Activated T-helper 1 cell treated with anti-CD3 and anti-CD28 coated beads, Interleukin-12 subunit alpha, Interleukin-12 subunit beta, Interleukin-2, Interleukin-4 antibody, amounts not matched to agents 30 ng/mL and 10 ng/mL and 1 ng/mL, durations not matched to agents 14 hours and 24 hours and 36 hours (primary cell): ENCODE measurements at regions of chr10 and their contacts with region 1.

Region 1: DNA sequence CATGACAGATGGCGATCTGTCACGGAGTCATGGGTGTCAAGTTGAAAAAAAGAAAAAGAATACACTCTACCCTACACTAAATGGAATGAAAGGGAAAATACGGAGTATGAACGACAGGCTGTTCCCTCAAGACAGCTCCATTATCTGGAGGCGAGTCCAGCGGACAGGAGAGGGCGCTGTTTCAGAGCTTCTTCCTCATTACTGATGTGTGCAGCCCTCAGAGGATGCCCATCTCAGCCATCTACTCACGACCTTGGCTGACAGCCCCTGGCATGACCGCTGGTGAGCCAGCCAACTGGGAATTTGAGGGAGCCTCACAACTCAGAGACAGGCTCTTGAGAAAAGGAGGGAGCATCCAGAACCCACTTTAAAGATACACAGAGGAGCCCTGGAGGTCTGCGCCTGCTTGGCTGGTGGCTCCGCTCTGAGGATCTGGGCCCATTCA is 49.6 kb upstream of the SMNDC1 start:
- DNase-seq: peak; percentile 72
- H3K4me3 Mint-ChIP-seq: peak overlapping the region; percentile 82
- H3K27ac Mint-ChIP-seq: peak overlapping the region; percentile 97
- H3K4me1 Mint-ChIP-seq: peaks cover 82% of the 10 kb centered on the region
- H3K27me3 Mint-ChIP-seq: no peaks in the 10 kb centered on the region

Region 2: DNA sequence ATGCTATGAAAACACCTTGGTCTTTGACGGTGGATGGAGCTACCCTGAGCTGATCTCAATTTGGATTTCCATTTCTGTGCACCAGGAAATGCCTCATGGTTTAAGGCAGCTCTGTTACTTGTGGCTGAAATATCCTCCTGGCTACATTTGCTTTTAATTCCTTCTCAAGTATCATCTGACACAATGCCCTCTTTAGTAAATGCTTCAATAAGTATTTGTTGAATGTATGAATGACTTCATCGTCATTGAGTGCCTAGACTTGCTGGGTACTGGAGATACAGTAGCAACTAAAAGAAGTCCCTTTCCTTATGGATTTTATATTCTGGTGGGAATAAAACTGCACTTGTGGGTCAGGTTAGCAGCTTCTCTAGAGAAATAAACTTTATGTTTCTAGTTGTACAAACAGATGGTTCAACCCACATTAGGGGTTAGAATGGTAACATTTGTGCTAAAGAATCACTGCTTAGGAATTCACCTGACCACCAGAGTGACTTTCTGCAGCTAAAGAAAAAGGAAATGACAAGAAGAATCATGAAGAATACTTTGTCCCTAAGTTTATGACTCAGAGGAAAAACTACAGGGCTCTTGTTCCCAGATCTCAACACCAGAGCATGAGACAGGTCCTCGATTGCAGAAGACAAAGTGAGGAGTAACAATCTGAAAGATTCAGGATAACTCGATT is 27.9 kb before region 1 on chr10:
- intact Hi-C with region 1: loop called (anchors 1 kb)
- DNase-seq: no peak
- H3K4me3 Mint-ChIP-seq: peak overlapping the region; percentile 0
- H3K27ac Mint-ChIP-seq: peak overlapping the region; percentile 69
- H3K4me1 Mint-ChIP-seq: peaks cover 60% of the 10 kb centered on the region
- H3K27me3 Mint-ChIP-seq: peaks cover 3% of the 10 kb centered on the region

Region 3: GRCh38 chr10:110395725-110396651 is 41.6 kb after region 1 on chr10:
- intact Hi-C with region 1: loop called (anchors 1 kb)
- DNase-seq: peak; percentile 67
- H3K4me3 Mint-ChIP-seq: peak overlapping the region; percentile 15
- H3K27ac Mint-ChIP-seq: peak overlapping the region; percentile 77
- H3K4me1 Mint-ChIP-seq: peaks cover 75% of the 10 kb centered on the region
- H3K27me3 Mint-ChIP-seq: no peaks in the 10 kb centered on the region

Region 4: DNA sequence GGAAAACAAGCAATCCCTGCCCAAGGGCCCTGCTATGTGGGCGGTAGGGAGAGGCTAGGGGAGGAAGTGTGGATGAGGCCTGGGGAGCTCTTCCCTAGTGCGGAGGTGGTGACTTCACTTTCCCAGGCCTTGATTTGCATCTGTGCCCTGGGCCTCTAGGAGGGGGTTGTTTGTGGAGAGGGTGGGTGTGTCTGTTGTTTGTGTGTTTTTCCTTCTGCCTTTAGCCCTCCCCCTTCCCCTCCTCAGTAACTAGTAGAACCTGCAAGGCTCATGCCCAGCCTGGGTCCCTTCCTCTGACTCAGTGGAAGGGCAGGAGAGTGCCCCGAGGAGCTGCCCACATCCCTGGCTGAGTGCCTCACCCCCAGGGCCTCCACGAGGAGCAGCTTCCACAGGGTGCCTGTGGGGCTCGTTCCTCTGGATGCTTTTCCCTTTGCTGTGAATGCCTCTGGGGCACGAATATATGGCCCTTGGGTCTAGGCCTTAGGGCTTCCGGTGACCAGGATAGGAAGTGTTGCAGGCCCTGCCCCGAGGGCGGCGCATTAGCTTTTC is 53.9 kb after region 1 on chr10:
- intact Hi-C with region 1: no loop called
- DNase-seq: no peak
- H3K4me3 Mint-ChIP-seq: no peak overlapping the region
- H3K27ac Mint-ChIP-seq: peak overlapping the region; percentile 72
- H3K4me1 Mint-ChIP-seq: peaks cover 77% of the 10 kb centered on the region
- H3K27me3 Mint-ChIP-seq: peaks cover 8% of the 10 kb centered on the region

Region 5: DNA sequence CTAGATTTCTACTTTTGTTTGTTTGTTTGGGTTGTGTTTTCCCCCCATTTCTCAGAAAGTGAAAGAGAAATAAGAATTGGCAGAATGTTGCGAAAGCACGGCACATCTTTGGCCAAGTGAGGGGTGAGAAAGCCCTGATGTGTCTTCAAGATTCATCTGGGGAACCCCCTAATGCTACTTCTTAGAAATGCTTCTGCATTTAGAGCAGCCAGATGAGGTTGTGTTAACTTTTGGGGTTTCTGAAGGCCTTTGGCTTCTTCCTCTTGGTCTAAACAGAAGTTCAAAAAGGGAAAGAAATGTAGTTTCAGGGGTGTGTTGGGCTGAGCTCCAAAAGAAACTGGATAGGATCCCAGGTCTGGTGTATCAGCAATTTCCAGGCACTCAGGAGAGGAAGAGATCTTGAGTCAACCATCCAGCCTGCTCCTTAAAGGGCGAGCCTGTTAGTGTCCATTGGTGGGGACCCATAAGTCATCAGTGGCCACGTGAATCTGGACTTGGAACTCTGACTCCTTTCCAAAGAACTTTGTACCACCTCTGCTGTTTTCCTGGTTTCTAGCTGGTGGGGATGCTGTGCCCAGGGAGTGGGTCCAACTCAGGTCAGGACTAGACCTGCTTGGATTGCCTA is 149.9 kb after region 1 on chr10:
- intact Hi-C with region 1: loop called (anchors 2 kb)
- DNase-seq: peak; percentile 77
- H3K4me3 Mint-ChIP-seq: peak overlapping the region; percentile 100
- H3K27ac Mint-ChIP-seq: peak overlapping the region; percentile 97
- H3K4me1 Mint-ChIP-seq: peaks cover 97% of the 10 kb centered on the region
- H3K27me3 Mint-ChIP-seq: no peaks in the 10 kb centered on the region

Region 6: DNA sequence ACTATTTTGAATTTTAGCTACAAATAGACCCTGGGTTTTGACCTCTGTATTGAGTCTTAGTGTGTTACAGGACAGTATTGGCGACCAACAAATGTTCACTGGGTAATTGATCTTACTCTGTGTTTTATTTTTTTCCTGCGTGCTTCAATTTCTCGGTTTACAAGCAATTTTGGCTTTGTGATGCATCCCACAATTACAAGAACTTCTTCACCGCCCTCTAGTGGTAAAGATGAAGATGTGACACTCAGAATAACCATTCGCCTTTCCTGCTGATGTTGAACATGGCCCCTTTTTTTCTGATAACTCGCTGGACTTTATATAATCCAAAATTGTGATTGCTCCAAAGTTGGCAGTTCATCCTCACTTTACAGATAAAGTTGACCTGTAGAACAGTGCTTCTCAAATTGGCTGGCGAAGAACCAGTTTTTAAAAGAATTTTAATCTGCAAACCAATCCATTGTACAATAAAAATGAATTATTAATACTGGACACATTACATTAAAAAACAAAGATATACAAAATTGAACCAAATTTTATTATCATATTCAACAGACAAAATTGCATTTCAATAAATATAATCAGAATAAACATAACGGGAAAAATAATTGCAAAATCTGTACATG is 192.9 kb after region 1 on chr10:
- intact Hi-C with region 1: loop called (anchors 1 kb)
- DNase-seq: no peak
- H3K4me3 Mint-ChIP-seq: no peak overlapping the region
- H3K27ac Mint-ChIP-seq: peak overlapping the region; percentile 3
- H3K4me1 Mint-ChIP-seq: peaks cover 29% of the 10 kb centered on the region
- H3K27me3 Mint-ChIP-seq: peaks cover 23% of the 10 kb centered on the region